ENCODE measurements at regions of chr1 and their contacts with region 1.

Region 1: GRCh38 chr1:200802865-200803512 is 64.3 kb downstream of the CAMSAP2 start:
- DNase-seq: peak; percentile 29 to 59
- ATAC-seq: peak; percentile 72 to 88
- H3K4me3 ChIP-seq: no peak overlapping the region
- H3K27ac ChIP-seq: no peak overlapping the region
- H3K4me1 ChIP-seq: peaks cover 0 to 4% of the 10 kb centered on the region in 2 donors
- H3K27me3 ChIP-seq: no peaks in the 10 kb centered on the region
- CTCF ChIP-seq: peak; percentile 84 to 94 (median 88)
- POLR2A ChIP-seq: no peak

Region 2: DNA sequence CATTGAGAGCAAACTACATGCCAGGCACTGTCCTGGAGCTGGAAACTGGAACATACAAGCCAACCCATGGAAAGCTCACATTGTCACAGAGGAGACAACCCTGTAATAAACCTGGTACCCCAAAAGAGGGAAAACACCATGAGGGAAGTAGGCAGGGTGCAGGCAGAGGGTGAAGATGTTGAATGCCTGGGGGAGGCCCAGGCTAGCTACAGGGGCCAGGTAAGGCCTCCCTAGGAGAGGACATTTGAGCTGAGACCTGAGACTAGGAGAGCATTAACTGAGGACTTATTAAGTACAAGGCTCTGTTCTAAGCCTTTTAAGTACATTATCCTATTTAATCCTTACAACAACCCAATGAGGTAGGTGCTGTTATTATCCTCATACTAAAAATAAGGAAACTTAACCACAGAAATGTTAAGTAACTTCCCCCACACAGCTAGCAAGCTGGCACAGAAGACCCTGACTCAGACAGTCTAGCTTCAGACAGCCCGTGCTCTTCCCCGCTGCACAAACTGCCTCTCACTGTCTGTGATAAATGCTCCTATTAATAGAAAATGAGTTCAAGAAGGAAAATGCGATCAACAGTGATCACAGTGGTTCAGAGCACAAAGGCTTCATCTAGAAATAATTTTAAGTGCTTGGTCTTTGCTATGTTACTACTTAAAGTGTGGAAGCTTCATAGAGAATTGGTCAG is 435.0 kb before region 1 on chr1:
- in situ Hi-C with region 1: no loop called
- intact Hi-C with region 1: no loop called
- DNase-seq: no peak
- ATAC-seq: no peak
- H3K4me3 ChIP-seq: no peak overlapping the region
- H3K27ac ChIP-seq: no peak overlapping the region
- H3K4me1 ChIP-seq: peaks cover 0 to 8% of the 10 kb centered on the region in 2 donors
- H3K27me3 ChIP-seq: no peaks in the 10 kb centered on the region
- CTCF ChIP-seq: no peak
- POLR2A ChIP-seq: no peak

Region 3: DNA sequence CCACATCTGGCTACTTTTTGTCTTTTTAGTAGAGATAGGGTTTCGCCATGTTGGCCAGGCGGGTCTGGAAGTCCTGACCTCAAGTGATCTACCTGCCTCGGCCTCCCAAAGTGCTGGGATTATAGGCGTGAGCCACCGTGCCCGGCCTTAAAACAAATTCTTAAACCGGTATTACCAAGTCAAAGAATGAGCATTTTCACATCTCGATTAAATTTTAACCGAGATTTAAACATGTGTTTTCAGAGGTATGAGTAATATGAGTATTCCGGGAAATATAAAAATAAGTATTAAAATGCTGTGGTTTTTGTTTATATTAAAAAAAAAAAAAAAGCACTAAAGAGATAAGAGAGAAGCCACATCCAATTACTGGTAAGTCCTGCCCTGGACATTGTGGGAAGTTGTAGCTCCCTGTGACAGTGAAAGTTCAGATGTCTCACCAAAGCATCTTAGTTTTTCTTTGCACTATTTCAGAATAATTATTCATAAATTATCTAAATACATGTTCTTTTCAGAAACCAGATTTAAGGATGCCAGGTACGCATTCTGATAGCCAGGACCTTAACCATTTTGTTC is 418.1 kb before region 1 on chr1:
- in situ Hi-C with region 1: no loop called
- intact Hi-C with region 1: no loop called
- DNase-seq: no peak
- ATAC-seq: no peak
- H3K4me3 ChIP-seq: no peak overlapping the region
- H3K27ac ChIP-seq: no peak overlapping the region
- H3K4me1 ChIP-seq: no peaks in the 10 kb centered on the region
- H3K27me3 ChIP-seq: no peaks in the 10 kb centered on the region
- CTCF ChIP-seq: no peak
- POLR2A ChIP-seq: no peak

Region 4: GRCh38 chr1:200669314-200670241 is 133.4 kb before region 1 on chr1 and contains the start of gene DDX59:
- in situ Hi-C with region 1: no loop called
- intact Hi-C with region 1: loop called (anchors 2 kb)
- DNase-seq: peak; percentile 92 to 95
- ATAC-seq: peak; percentile 86 to 87
- H3K4me3 ChIP-seq: peak within 1 kb of the TSS; percentile 77 to 95 (median 90)
- H3K27ac ChIP-seq: peak within 1 kb of the TSS; percentile 98 to 99 (median 99)
- H3K4me1 ChIP-seq: peaks cover 22 to 29% of the 10 kb centered on the region in 2 donors
- H3K27me3 ChIP-seq: no peaks in the 10 kb centered on the region
- CTCF ChIP-seq: peak in 1 of 5 experiments; percentile 21
- POLR2A ChIP-seq: peak; percentile 94
- total RNA-seq, gene DDX59: 36.7 to 52.7 (median 39.5) TPM

Measured in gastrocnemius medialis (tissue), 4 donors.